ENCODE measurements at regions of chr7 and their contacts with region 1.

Region 1: DNA sequence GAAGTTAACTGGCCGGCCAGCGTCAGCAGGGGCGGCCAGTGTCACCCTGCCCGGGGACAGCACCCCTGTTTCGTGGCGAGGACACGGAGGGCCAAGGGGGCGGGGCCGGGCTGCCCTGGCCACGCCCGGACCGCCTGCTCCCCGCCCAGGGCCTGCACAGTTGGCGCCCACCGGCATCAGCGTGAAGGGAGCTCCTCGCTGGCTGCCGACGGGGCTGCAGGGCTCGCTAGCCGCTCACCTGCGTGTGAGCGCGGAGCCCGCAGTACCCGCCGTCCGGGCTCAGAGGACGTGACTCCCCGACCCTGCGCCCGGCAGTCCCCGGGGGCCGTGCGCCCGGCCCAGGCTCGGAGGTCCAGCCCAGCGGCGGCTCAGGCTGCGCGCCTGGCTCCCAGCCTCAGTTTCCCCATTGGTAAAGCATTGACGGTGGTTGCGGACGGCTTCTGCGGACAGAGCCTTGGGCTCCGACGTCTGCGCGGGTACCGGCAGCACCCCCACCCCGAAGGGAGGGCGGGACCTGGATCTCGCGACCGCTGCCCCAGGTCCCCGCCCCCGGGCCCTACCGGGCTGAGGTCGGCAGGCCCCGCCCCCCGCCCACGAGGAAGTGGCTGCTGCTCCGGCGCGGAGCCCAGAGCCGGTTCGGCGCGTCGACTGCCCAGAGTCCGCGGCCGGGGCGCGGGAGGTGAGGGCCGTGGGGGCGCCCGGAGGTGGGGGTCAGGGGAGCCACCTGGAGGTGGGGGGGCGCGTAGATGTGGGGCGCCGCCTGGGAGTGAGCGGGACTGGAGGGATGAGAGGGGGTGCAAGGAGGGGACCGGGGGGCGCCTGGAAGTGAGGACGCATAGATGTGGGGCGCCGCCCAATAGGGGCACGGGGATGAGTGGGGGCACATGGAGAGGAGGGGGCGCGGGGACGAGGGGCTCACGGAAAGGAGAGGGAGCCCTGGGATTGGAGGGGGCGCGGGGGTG is at the start of gene ARPC1B:
- DNase-seq: peak; percentile 95
- ATAC-seq: peak; percentile 79
- total RNA-seq, gene ARPC1B: 51.1 TPM

Region 2: GRCh38 chr7:99331002-99331401 is 43.4 kb before region 1 on chr7:
- intact Hi-C with region 1: loop called (anchors 5 kb)
- DNase-seq: no peak
- ATAC-seq: no peak

Region 3: DNA sequence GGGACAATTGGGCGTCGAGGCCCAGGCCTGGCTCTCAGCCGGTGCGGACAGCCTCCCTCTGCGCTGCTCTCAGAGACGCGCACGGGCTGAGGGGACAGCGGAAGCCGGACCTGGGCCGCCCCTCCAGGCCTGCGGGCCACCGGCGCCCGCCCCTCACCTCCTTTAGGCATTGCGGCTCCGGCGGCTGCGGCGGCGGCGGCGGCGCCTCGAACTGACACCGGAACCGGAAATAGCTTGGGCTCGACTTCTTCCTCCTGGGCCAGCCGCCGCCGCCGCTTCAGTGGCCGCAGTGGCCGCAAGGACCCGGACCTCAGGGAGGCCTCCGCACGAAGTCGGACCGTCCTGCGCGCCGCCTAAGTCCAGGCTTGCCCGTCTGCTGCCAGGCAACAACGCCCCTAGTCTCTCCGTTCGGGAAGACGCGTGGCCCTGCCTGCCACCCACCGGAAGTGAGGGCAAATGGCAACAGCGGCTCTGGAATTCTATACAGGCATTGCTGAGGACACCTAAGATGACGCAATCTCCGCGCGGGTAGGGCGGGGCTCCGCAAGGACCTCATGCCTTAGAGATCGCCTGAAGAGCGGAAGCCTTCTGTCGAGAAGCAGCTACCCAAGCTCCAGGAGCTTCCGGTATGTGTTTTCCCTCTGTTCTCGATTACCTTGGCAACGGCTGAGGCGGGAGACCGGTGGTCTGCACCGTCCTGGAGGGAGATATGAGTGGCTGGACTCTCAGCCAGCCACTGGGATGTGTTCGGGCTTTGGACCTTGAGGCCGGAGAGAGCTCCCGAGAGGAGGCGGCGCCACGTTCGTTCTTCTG is 34.2 kb after region 1 on chr7 and contains the starts of genes BUD31 and PDAP1:
- intact Hi-C with region 1: loop called (anchors 1 kb)
- DNase-seq: peak; percentile 97
- ATAC-seq: peak; percentile 95
- total RNA-seq, gene BUD31: 38.1 TPM
- total RNA-seq, gene PDAP1: 107 TPM

Measured in Right ventricle myocardium inferior (tissue), 1 donor.